ENCODE measurements at regions of chr1 and their contacts with region 1.

Region 1: GRCh38 chr1:110312188-110313121 is 26.7 kb upstream of the RBM15 start:
- DNase-seq: peak; percentile 78 to 87 (median 86)
- H3K4me3 ChIP-seq: no peak overlapping the region
- H3K27ac ChIP-seq: no peak overlapping the region
- H3K4me1 ChIP-seq: peaks cover 2% of the 10 kb centered on the region
- H3K27me3 ChIP-seq: no peaks in the 10 kb centered on the region
- CTCF ChIP-seq: peak; percentile 76 to 93 (median 89)
- EP300 ChIP-seq: no peak
- POLR2A ChIP-seq: peak; percentile 11

Region 2: GRCh38 chr1:110176299-110176956 is 136.0 kb before region 1 on chr1:
- intact Hi-C with region 1: no loop called
- DNase-seq: no peak
- H3K4me3 ChIP-seq: no peak overlapping the region
- H3K27ac ChIP-seq: no peak overlapping the region
- H3K4me1 ChIP-seq: no peaks in the 10 kb centered on the region
- H3K27me3 ChIP-seq: no peaks in the 10 kb centered on the region
- CTCF ChIP-seq: no peak
- EP300 ChIP-seq: no peak
- POLR2A ChIP-seq: no peak

Region 3: GRCh38 chr1:110197905-110198629 is 114.4 kb before region 1 on chr1:
- intact Hi-C with region 1: loop called in 1 of 4 experiments (anchors 2 kb)
- DNase-seq: no peak
- H3K4me3 ChIP-seq: no peak overlapping the region
- H3K27ac ChIP-seq: no peak overlapping the region
- H3K4me1 ChIP-seq: no peaks in the 10 kb centered on the region
- H3K27me3 ChIP-seq: no peaks in the 10 kb centered on the region
- CTCF ChIP-seq: no peak
- EP300 ChIP-seq: no peak
- POLR2A ChIP-seq: no peak

Region 4: GRCh38 chr1:110209715-110210603 is 102.5 kb before region 1 on chr1 and contains the start of gene KCNC4:
- intact Hi-C with region 1: loop called (anchors 2 kb)
- DNase-seq: peak; percentile 82 to 87 (median 86)
- H3K4me3 ChIP-seq: peak within 1 kb of the TSS; percentile 66
- H3K27ac ChIP-seq: peak within 1 kb of the TSS; percentile 70 to 80
- H3K4me1 ChIP-seq: peaks cover 13% of the 10 kb centered on the region
- H3K27me3 ChIP-seq: no peaks in the 10 kb centered on the region
- CTCF ChIP-seq: no peak
- EP300 ChIP-seq: no peak
- POLR2A ChIP-seq: peak; percentile 35
- total RNA-seq, gene KCNC4: 5.5 to 18.0 (median 14.2) TPM

Region 5: DNA sequence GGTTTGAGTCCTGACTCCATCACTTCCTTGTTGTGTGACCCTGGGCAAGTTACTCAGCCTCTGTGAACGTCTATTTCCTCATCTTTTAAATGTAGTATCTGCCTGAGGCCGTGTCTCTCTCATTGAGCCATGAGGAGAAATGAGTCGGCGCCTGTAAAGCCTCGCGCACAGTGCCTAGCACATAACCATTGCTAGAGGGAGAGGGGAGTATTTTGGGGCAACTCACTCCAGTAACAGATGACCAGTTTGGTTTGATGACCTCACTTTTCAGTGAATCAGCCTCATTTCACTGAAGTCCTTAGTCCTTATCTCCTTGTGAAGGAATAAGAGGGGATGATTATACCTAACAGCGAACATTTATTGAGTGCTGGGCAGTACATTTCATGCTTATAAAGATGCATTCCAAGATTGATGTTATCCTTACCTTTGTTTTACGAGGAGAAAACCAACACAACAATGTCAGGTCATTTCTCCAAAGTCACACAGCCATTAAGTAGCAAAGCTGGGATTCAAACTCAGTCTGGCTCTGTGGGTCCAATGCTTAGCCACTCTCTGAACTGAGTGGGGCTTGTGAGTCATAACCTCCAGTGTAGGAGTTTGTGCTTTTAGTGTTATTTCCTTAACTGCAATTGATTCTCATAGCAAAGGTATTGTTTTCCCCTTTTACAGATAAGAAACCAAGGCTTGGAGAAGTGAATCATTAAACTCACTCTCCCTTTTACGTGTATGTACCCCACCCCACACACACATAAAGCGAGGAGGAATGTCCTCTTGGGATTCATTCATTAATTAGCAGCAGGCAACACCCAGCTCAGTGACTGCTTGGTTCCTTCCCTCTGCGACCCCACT is 76.4 kb before region 1 on chr1:
- intact Hi-C with region 1: no loop called
- DNase-seq: peak in 3 of 5 donors; percentile 49 to 66 (median 53)
- H3K4me3 ChIP-seq: no peak overlapping the region
- H3K27ac ChIP-seq: peak overlapping the region; percentile 3 to 64
- H3K4me1 ChIP-seq: peaks cover 12% of the 10 kb centered on the region
- H3K27me3 ChIP-seq: no peaks in the 10 kb centered on the region
- CTCF ChIP-seq: no peak
- EP300 ChIP-seq: no peak
- POLR2A ChIP-seq: no peak

Region 6: GRCh38 chr1:110455151-110455550 is 142.7 kb after region 1 on chr1:
- intact Hi-C with region 1: loop called in 1 of 4 experiments (anchors 10 kb)
- DNase-seq: no peak
- H3K4me3 ChIP-seq: no peak overlapping the region
- H3K27ac ChIP-seq: no peak overlapping the region
- H3K4me1 ChIP-seq: peaks cover 17% of the 10 kb centered on the region
- H3K27me3 ChIP-seq: no peaks in the 10 kb centered on the region
- CTCF ChIP-seq: no peak
- EP300 ChIP-seq: no peak
- POLR2A ChIP-seq: no peak